WTC11 (cell line): ENCODE measurements at regions of chr17 and their contacts with region 1.

Region 1: DNA sequence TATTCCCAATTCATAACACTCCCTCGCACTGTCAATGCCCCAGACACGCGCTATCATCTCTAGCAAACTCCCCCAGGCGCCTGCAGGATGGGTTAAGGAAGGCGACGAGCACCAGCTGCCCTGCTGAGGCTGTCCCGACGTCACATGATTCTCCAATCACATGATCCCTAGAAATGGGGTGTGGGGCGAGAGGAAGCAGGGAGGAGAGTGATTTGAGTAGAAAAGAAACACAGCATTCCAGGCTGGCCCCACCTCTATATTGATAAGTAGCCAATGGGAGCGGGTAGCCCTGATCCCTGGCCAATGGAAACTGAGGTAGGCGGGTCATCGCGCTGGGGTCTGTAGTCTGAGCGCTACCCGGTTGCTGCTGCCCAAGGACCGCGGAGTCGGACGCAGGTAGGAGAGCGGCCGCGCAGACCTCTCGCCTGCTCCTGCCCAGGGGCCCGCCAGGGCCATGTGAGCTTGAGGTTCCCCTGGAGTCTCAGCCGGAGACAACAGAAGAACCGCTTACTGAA is at the start of gene GRN:
- DNase-seq: peak; percentile 95
- ATAC-seq: peak; percentile 99
- H3K4me3 Mint-ChIP-seq: peak within 1 kb of the TSS; percentile 85
- H3K27ac Mint-ChIP-seq: peak within 1 kb of the TSS; percentile 95
- H3K4me1 Mint-ChIP-seq: peaks cover 8% of the 10 kb centered on the region
- H3K27me3 Mint-ChIP-seq: peaks cover 20% of the 10 kb centered on the region
- CTCF ChIP-seq: no peak
- total RNA-seq, gene GRN: 177 to 185 TPM (median 185 TPM) in 3 replicates

Region 2: DNA sequence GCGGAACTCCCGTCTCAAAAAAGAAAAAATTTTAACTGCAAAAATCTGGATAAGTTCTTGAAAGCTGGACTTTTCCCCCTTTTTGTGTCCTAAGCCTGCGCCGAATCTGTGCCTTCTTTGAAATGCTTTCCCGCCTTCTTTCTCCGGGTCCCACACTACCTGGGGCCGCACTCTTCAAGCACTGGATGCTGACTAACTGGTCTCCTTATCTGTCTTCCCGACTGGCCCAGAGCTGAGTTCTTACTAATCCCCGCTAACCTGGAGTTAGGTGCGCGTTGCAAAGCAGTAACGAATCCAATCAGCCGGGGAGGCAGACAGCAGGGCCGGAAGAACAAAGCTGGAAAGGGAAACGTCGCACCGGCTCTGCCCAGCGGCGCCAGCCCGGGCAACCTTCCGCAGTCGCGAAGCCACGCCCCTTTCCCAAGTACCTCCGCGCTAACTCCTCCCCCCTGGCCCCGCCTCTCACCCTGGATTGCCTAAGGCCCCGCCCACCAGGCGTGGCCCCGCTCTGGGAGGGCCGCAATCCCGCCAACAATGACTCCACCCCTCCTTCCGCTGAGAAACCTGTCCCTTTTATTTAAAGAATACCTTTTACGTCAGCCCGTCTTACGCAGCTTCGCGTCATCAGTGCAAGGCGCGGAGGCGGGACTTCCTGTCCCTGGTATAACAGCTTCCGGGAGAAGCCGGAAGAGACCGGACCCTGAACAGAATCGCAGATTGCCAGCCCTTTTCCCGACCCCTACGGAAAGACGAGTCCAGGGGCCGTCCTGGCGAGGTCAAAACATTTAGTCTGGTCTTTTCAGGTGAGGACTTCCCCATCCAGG is 158.5 kb before region 1 on chr17 and contains the start of gene TMUB2:
- CTCF ChIA-PET with region 1: interaction called, 11 read pairs
- POLR2A ChIA-PET with region 1: no interaction called
- DNase-seq: peak; percentile 100
- ATAC-seq: peak; percentile 93
- H3K4me3 Mint-ChIP-seq: peak within 1 kb of the TSS; percentile 100
- H3K27ac Mint-ChIP-seq: peak within 1 kb of the TSS; percentile 99
- H3K4me1 Mint-ChIP-seq: peaks cover 18% of the 10 kb centered on the region
- H3K27me3 Mint-ChIP-seq: no peaks in the 10 kb centered on the region
- CTCF ChIP-seq: no peak
- total RNA-seq, gene TMUB2: 21.9 to 26.9 TPM (median 25.3 TPM) in 3 replicates

Region 3: GRCh38 chr17:44210342-44211192 is 134.4 kb before region 1 on chr17:
- CTCF ChIA-PET with region 1: interaction called, 61 read pairs
- POLR2A ChIA-PET with region 1: no interaction called
- DNase-seq: peak; percentile 94
- ATAC-seq: peak; percentile 89
- H3K4me3 Mint-ChIP-seq: no peak overlapping the region
- H3K27ac Mint-ChIP-seq: peak overlapping the region; percentile 42
- H3K4me1 Mint-ChIP-seq: peaks cover 20% of the 10 kb centered on the region
- H3K27me3 Mint-ChIP-seq: no peaks in the 10 kb centered on the region
- CTCF ChIP-seq: peak; percentile 95

Region 4: GRCh38 chr17:44266402-44267164 is 78.4 kb before region 1 on chr17:
- CTCF ChIA-PET with region 1: no interaction called
- POLR2A ChIA-PET with region 1: no interaction called
- DNase-seq: no peak
- ATAC-seq: no peak
- H3K4me3 Mint-ChIP-seq: no peak overlapping the region
- H3K27ac Mint-ChIP-seq: no peak overlapping the region
- H3K4me1 Mint-ChIP-seq: no peaks in the 10 kb centered on the region
- H3K27me3 Mint-ChIP-seq: no peaks in the 10 kb centered on the region; the same call in 1 of the 2 replicates
- CTCF ChIP-seq: no peak

Region 5: GRCh38 chr17:44308320-44308818 is 36.6 kb before region 1 on chr17 and contains the start of gene RUNDC3A:
- CTCF ChIA-PET with region 1: interaction called, 11 read pairs
- POLR2A ChIA-PET with region 1: interaction called, 3 read pairs
- DNase-seq: peak; percentile 96
- ATAC-seq: peak; percentile 91
- H3K4me3 Mint-ChIP-seq: peak within 1 kb of the TSS; percentile 69
- H3K27ac Mint-ChIP-seq: peak within 1 kb of the TSS; percentile 72; the same call in 1 of the 2 replicates
- H3K4me1 Mint-ChIP-seq: peaks cover 41% of the 10 kb centered on the region
- H3K27me3 Mint-ChIP-seq: peaks cover 9% of the 10 kb centered on the region
- CTCF ChIP-seq: no peak
- total RNA-seq, gene RUNDC3A: 5.1 to 6.5 TPM (median 5.2 TPM) in 3 replicates

Region 6: GRCh38 chr17:44324571-44325275 is 20.3 kb before region 1 on chr17 and contains the start of gene SLC25A39:
- CTCF ChIA-PET with region 1: interaction called, 78 read pairs
- POLR2A ChIA-PET with region 1: interaction called, 3 read pairs
- DNase-seq: peak; percentile 94
- ATAC-seq: peak; percentile 71
- H3K4me3 Mint-ChIP-seq: peak within 1 kb of the TSS; percentile 86
- H3K27ac Mint-ChIP-seq: peak within 1 kb of the TSS; percentile 76
- H3K4me1 Mint-ChIP-seq: peaks cover 13% of the 10 kb centered on the region
- H3K27me3 Mint-ChIP-seq: peaks cover 8% of the 10 kb centered on the region
- CTCF ChIP-seq: no peak
- total RNA-seq, gene SLC25A39: 254 to 271 TPM (median 268 TPM) in 3 replicates

Region 7: DNA sequence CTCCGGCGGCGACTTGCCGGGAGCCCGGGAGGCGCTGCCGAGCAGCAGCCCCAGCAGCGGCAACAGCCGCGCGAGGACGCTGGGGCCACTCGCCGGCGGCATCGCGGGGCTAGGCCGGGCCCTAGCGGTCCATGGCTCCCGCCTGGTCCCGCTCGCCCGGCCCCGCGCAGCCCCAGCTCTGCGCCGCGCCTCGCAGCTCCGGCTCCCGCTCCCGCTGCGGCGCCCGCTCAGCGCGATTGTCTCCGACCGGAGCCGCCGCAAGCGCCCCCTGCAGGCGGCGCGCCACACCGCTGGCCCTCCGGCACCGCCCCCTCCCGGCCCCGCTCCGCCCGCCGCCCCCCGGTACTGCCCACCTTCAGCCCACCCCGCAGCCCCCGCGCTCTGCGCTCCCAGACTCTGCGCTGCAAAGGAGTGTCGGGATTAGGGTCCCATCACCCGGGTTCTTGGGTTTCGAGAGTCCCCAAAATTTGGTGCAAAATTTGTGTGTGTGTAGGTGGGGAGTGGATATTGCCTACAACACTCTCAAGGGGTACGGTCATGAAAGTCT is 18.7 kb after region 1 on chr17 and contains the start of gene FAM171A2:
- CTCF ChIA-PET with region 1: interaction called, 102 read pairs
- POLR2A ChIA-PET with region 1: interaction called, 6 read pairs
- DNase-seq: peak; percentile 79
- ATAC-seq: peak; percentile 76
- H3K4me3 Mint-ChIP-seq: peak within 1 kb of the TSS; percentile 74
- H3K27ac Mint-ChIP-seq: no peak within 1 kb of the TSS
- H3K4me1 Mint-ChIP-seq: peaks cover 22% of the 10 kb centered on the region
- H3K27me3 Mint-ChIP-seq: peaks cover 42% of the 10 kb centered on the region
- CTCF ChIP-seq: peak; percentile 79
- total RNA-seq, gene FAM171A2: 28.2 to 29.9 TPM (median 28.5 TPM) in 3 replicates